ENCODE measurements at regions of chr15 and their contacts with region 1.

Region 1: GRCh38 chr15:56821721-56822425 is 88.6 kb upstream of the ZNF280D start:
- DNase-seq: peak; percentile 56
- H3K4me3 ChIP-seq: no peak overlapping the region
- H3K27ac ChIP-seq: no peak overlapping the region
- H3K4me1 ChIP-seq: peaks cover 19% of the 10 kb centered on the region
- H3K27me3 ChIP-seq: no peaks in the 10 kb centered on the region
- CTCF ChIP-seq: peak; percentile 62 to 88

Region 2: GRCh38 chr15:56491110-56491722 is 330.7 kb before region 1 on chr15:
- CTCF ChIA-PET with region 1: interaction called, 3 read pairs
- dilution Hi-C with region 1: no loop called
- in situ Hi-C with region 1: loop called in 1 of 2 experiments (anchors 25 kb)
- intact Hi-C with region 1: loop called (anchors 2 kb)
- DNase-seq: peak; percentile 48
- H3K4me3 ChIP-seq: no peak overlapping the region
- H3K27ac ChIP-seq: no peak overlapping the region
- H3K4me1 ChIP-seq: no peaks in the 10 kb centered on the region
- H3K27me3 ChIP-seq: no peaks in the 10 kb centered on the region
- CTCF ChIP-seq: peak; percentile 95 to 99

Region 3: GRCh38 chr15:56732921-56733797 is 88.7 kb before region 1 on chr15 and contains the start of gene ZNF280D:
- CTCF ChIA-PET with region 1: no interaction called
- dilution Hi-C with region 1: no loop called
- in situ Hi-C with region 1: no loop called
- intact Hi-C with region 1: loop called (anchors 5 kb)
- DNase-seq: peak; percentile 83
- H3K4me3 ChIP-seq: peak within 1 kb of the TSS; percentile 73 to 80 (median 75)
- H3K27ac ChIP-seq: peak within 1 kb of the TSS; percentile 67
- H3K4me1 ChIP-seq: peaks cover 21% of the 10 kb centered on the region
- H3K27me3 ChIP-seq: no peaks in the 10 kb centered on the region
- CTCF ChIP-seq: no peak
- total RNA-seq, gene ZNF280D: 24.1 to 25.7 TPM

Region 4: DNA sequence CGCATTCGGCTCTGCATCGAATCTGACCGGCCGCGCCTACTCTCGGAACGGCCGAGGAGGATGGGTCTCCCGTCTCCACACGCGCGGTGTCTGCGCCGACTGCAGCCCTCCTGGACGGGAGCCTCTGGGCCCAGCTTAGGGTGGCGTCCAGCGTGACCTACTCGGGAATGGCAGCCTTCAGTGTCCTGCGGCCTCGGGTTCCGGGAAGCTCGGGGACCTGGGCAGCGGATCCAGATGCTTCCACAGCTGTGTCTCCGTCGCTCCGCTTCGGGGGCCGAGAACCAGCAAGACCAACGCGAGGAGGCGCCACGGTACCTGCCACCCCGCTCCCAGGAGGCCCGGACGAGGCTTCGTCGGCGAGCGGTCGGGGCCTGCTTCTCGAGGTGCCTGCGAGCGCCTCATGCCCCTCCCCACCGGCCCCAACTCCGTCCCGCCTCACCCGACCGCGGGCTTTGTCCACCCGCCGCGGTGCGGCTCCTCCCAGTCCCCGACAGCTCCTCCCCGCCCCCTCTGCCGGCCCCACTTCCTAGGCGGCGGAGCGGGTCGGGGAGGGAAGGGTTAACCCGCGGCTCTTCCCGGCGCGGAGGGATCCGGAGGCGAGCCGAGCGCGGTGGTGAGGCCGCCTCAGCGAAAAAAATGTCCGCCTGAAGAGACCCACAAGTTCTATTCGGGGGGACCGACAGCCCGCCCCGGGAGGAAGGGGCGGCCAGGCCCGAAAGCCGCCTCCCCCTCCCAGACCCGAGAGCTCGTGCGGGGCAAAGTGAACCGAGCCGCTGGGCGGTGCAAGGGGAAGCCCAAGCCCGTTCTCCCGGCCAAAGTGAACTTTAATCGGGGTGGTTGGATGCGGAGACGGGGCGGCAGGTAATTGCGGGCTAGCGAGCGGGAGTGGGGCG is 96.4 kb after region 1 on chr15 and contains the start of gene TCF12:
- CTCF ChIA-PET with region 1: no interaction called
- dilution Hi-C with region 1: no loop called
- in situ Hi-C with region 1: no loop called
- intact Hi-C with region 1: loop called (anchors 2 kb)
- DNase-seq: peak; percentile 95
- H3K4me3 ChIP-seq: peak within 1 kb of the TSS; percentile 90 to 98 (median 97)
- H3K27ac ChIP-seq: peak within 1 kb of the TSS; percentile 84
- H3K4me1 ChIP-seq: peaks cover 8% of the 10 kb centered on the region
- H3K27me3 ChIP-seq: no peaks in the 10 kb centered on the region
- CTCF ChIP-seq: peak in 1 of 2 donors; percentile 66
- total RNA-seq, gene TCF12: 91.7 to 110 TPM

Region 5: DNA sequence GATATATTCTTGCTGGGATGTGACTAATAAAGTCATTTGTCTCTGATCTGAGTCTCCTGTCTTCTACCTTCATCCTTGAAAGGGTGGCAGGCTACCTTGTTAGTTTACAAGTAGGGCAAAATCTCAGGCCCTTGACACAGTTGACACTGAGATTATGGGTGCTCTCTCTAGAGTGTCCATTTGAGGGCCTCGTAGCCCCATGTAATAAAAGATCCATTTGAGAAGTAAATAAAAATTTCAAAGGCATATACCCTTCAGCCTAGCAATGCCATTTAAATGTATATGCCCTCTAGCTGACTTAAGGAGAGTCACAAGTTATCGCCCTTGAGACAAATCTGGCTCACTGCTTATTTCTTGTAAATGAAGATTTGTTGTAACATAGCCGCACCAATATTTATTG is 195.2 kb after region 1 on chr15:
- CTCF ChIA-PET with region 1: no interaction called
- dilution Hi-C with region 1: no loop called
- in situ Hi-C with region 1: no loop called
- intact Hi-C with region 1: loop called (anchors 1 kb)
- DNase-seq: no peak
- H3K4me3 ChIP-seq: no peak overlapping the region
- H3K27ac ChIP-seq: no peak overlapping the region
- H3K4me1 ChIP-seq: peaks cover 25% of the 10 kb centered on the region
- H3K27me3 ChIP-seq: no peaks in the 10 kb centered on the region
- CTCF ChIP-seq: peak in 1 of 2 donors; percentile 29

Region 6: DNA sequence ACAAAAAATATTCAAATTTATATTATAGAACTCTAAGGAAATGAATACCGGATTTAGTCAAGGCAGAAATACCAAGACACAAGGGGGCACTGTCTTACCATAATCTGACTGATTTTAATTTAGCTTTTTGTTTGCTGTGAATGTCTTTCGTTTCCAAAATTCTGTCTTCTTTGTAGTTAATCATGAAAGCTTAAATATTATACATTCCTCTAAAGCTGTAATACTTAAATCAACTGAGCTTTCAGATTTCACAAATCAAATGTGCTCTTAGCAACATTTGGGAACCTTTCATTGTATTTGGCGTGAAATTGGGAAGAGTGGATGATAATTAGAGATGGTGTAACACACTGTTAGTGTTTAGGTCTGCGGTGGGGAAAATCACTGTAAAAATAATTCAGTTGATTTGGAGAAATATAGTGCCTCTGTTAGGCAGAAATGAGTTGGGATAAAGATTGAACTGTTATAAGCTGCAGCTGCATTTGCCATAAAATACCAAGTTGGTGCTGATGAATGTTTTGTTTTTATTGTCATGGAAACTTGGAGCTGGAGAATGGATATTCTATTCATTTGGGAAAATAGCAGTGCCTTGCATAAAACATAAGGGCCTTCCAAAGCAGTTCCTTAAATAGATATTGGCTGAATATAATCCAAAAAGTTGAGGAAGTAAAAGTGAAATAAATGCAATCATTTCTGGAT is 324.8 kb after region 1 on chr15:
- CTCF ChIA-PET with region 1: no interaction called
- dilution Hi-C with region 1: no loop called
- in situ Hi-C with region 1: loop called in 1 of 2 experiments (anchors 25 kb)
- intact Hi-C with region 1: no loop called
- DNase-seq: peak; percentile 29
- H3K4me3 ChIP-seq: no peak overlapping the region
- H3K27ac ChIP-seq: peak overlapping the region; percentile 52
- H3K4me1 ChIP-seq: peaks cover 31% of the 10 kb centered on the region
- H3K27me3 ChIP-seq: no peaks in the 10 kb centered on the region
- CTCF ChIP-seq: peak; percentile 48 to 66

Region 7: DNA sequence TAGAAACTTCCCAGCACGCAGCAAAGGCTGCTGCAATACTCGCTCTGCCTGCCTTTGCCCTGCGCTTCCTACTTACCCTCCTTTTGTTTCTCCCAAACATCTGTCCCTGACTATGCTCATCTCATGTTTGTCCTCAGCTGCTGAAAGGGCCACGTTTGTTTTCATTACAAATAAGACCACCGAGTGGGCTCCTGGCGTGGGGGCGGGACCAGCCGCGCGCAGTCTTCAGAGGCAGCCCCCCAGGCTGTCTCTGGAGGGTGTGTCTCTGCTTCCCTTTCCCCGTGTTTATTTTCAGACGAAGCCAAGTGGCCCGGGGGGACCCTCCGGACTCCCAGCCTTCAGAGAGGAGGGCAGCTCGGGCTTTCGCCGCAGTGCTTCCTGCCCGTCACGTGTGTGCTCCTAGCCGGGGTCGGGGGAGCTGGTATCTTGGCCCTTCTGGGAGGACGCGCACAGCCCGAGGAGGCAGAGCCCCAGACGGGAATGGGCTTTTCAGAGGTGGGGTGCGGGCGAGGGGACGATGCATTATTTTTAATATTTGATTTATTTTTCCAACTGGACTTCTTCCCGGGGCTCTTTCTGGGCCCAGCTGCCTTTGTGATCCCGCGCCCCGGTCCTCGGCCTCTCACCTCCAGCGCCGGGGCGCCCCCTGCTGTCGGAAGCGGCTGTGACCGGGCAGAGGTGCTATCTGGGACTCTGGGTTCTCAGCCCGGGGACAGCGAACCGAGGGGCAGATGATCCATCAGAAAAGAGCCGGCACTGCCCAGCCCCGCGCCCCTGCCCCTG is 484.5 kb after region 1 on chr15:
- CTCF ChIA-PET with region 1: interaction called, 5 read pairs
- dilution Hi-C with region 1: no loop called
- in situ Hi-C with region 1: loop called in 1 of 2 experiments (anchors 25 kb)
- intact Hi-C with region 1: loop called (anchors 1 kb)
- DNase-seq: peak; percentile 42
- H3K4me3 ChIP-seq: peak overlapping the region; percentile 39 to 53 (median 46)
- H3K27ac ChIP-seq: no peak overlapping the region
- H3K4me1 ChIP-seq: peaks cover 12% of the 10 kb centered on the region
- H3K27me3 ChIP-seq: no peaks in the 10 kb centered on the region
- CTCF ChIP-seq: peak; percentile 55 to 91

Measured in mammary epithelial cell (primary cell).